ENCODE measurements at regions of chr3 and their contacts with region 1.

Region 1: GRCh38 chr3:40317061-40317855 is 7.8 kb downstream of the EIF1B start:
- DNase-seq: no peak

Region 2: GRCh38 chr3:40054568-40055222 is 262.6 kb before region 1 on chr3:
- intact Hi-C with region 1: no loop called
- DNase-seq: no peak

Region 3: GRCh38 chr3:40191850-40192448 is 125.3 kb before region 1 on chr3:
- intact Hi-C with region 1: loop called (anchors 2 to 5 kb)
- DNase-seq: no peak

Measured in posterior vena cava (tissue), 2 donors.